Activated CD4-positive, alpha-beta T cell treated with anti-CD3 and anti-CD28 coated beads for 36 hours (primary cell): ENCODE measurements at regions of chr9 and their contacts with region 1.

Region 1: DNA sequence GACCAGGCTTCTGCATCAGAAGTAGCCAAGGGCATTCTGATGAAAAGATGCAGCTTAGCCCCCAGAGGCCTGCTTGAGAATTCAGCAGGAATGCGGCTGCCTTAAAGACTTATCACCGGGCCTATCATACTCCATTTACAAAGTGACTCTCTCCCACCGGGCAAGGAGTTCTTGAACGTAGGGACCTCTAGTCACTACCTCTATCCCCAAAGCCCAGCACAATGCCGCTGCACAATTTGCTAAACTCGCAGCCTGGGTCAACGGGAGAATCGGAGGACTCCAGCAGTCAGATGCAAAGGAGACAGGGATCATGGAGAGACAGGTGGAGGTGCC is 661 bp downstream of the PDCL start:
- DNase-seq: peak; percentile 22
- ATAC-seq: peak; percentile 1
- H3K4me3 Mint-ChIP-seq: peak overlapping the region; percentile 92
- H3K27ac Mint-ChIP-seq: peak overlapping the region; percentile 90
- H3K4me1 Mint-ChIP-seq: peaks cover 31% of the 10 kb centered on the region
- H3K27me3 Mint-ChIP-seq: no peaks in the 10 kb centered on the region

Region 2: DNA sequence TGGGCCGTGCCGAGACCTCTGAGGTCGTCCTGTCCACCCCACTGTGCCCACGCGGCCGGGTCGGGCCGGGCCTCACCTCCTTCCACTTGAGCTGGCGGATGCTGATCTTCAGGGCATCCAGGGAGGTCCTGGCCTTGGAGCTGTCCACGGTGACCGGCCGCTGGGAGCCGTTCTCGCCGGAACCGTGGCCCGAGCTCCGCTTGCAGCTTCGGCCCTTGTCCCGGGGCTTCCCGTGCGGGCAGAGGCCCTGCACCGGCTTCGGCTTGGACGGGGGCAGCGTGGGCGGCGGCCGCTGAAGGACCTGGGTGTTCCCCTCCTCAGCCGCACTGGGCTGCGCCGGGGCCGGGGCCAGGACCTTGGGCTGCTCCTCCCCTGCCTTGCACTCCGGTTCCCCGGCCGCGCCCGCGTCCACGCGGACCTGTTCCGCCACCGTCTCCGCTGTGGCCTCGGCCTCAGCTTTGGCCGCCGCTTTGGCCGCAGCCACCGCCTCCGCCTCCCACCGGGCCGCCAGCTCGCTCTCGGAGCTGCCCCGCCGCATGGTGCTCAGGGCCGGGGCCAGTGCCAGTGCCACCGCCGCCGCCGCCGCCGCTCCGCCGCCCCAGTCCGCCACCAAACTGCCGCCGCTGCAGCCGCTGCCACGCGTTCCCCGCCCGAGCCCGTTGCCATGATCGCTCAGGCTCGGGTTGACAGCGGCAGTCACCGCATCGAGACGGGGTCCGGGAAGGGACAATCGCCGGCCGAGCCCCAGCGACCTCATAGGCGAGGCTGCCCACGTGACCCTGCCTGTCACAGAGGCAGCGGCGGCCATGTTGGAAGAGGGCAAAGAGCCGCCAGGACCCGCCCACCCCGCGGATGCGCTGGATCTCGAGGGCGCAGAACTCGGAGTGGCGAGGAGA is 734.9 kb before region 1 on chr9 and contains the start of gene TTLL11:
- CTCF ChIA-PET with region 1: interaction called, 3 read pairs
- POLR2A ChIA-PET with region 1: no interaction called
- intact Hi-C with region 1: loop called in 1 of 2 experiments (anchors 1 kb)
- DNase-seq: peak; percentile 99
- ATAC-seq: peak; percentile 95
- H3K4me3 Mint-ChIP-seq: peak within 1 kb of the TSS; percentile 78
- H3K27ac Mint-ChIP-seq: peak within 1 kb of the TSS; percentile 8
- H3K4me1 Mint-ChIP-seq: peaks cover 29% of the 10 kb centered on the region
- H3K27me3 Mint-ChIP-seq: peaks cover 5% of the 10 kb centered on the region
- total RNA-seq, gene TTLL11: 1.3 to 1.8 TPM

Region 3: GRCh38 chr9:122264360-122265148 is 563.2 kb before region 1 on chr9 and contains the starts of genes MRRF and RBM18:
- CTCF ChIA-PET with region 1: no interaction called
- POLR2A ChIA-PET with region 1: no interaction called
- intact Hi-C with region 1: loop called in 1 of 2 experiments (anchors 1 kb)
- DNase-seq: peak; percentile 93
- ATAC-seq: peak; percentile 83
- H3K4me3 Mint-ChIP-seq: peak within 1 kb of the TSS; percentile 98
- H3K27ac Mint-ChIP-seq: peak within 1 kb of the TSS; percentile 99
- H3K4me1 Mint-ChIP-seq: peaks cover 44% of the 10 kb centered on the region
- H3K27me3 Mint-ChIP-seq: no peaks in the 10 kb centered on the region
- total RNA-seq, gene MRRF: 57.3 to 61.5 TPM
- total RNA-seq, gene RBM18: 22.3 to 28.6 TPM

Region 4: DNA sequence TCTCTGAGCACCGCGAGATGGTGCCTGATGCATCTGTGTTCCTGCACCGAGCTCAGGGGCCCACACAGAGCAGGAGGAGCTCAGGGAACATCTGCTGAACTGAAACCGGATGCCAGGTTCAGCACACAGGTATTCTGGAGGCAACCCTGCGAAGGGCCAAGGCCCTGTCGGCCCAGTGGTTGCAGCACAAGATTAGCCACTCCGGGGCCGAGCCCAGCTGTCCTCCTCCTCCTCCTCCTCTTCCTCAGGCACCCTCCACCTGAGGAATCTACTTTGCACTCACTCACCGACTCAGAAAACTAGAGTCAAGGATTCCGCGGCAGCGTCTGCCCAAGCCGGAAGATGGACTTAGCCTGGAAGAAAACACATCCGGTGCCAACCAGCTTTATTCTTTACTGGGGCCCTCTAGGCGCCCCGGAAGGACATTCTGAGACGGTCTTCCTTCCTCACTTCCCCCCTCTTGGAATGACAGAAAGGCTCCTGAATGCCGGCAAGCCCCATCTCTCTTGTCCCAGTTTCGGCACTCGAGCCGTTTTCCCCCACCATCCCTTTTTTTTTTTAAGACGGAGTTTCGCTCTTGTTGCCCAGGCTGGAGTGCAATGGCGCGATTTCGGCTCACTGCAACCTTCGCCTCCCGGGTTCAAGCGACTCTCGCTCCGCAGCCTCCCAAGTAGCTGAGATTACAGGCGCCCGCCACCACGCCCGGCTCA is 85.4 kb after region 1 on chr9 and contains the start of gene ZBTB6:
- CTCF ChIA-PET with region 1: no interaction called
- POLR2A ChIA-PET with region 1: no interaction called
- intact Hi-C with region 1: loop called (anchors 1 to 5 kb)
- DNase-seq: peak; percentile 86
- ATAC-seq: peak; percentile 96
- H3K4me3 Mint-ChIP-seq: peak within 1 kb of the TSS; percentile 100
- H3K27ac Mint-ChIP-seq: peak within 1 kb of the TSS; percentile 100
- H3K4me1 Mint-ChIP-seq: peaks cover 33% of the 10 kb centered on the region
- H3K27me3 Mint-ChIP-seq: no peaks in the 10 kb centered on the region
- total RNA-seq, gene ZBTB6: 8.8 to 9.3 TPM

Region 5: DNA sequence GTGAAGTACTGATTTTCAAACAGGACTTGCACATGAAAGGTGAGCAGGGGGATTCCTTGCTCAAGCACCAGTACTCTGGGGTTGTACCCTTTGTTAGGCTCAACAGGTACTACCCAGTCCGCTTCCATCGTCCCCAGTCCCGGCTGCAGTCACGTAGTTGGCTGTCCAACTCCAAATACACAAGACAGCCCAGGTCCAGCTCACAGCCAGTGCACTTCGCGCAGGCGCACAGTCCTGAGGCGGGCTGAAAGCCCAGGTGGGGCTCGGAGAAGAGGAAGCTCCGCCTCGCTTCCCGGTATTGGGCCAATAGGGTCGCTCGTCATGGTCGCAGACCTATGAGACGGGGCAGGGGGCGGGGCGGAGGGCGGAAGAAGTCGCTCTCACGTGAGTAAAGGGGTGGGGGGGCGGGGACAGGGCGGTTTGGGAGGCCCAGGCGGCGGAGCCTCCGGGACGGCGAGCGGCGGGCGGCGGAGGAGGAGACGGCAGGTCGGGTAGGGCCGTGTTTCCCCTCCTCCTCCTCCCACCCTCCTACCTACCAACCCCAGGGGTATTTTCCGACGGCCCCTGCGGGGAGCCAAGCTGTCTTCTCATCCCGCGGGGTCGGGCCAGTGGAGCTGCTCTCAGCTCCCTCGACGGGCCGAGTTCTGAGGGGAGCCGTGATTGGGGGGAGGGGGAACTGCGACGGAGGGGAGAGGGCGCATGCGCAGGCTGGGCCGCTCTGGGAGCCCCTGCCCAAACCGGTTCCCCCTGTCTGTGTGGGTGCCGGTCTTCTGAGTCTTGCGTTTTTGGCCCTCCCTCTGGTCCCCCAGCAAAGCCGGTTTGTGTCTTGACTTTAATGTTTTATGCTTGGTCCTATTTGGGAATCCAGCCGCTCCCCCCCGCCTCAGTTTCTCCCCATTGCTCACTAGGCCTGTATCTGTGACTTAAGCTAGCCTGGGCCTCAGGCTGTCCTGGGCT is 113.2 kb after region 1 on chr9 and contains the start of gene RABGAP1:
- CTCF ChIA-PET with region 1: interaction called, 5 read pairs
- POLR2A ChIA-PET with region 1: interaction called, 5 read pairs
- intact Hi-C with region 1: loop called in 1 of 2 experiments (anchors 2 kb)
- DNase-seq: peak; percentile 99
- ATAC-seq: peak; percentile 99
- H3K4me3 Mint-ChIP-seq: peak within 1 kb of the TSS; percentile 99
- H3K27ac Mint-ChIP-seq: peak within 1 kb of the TSS; percentile 95
- H3K4me1 Mint-ChIP-seq: peaks cover 33% of the 10 kb centered on the region
- H3K27me3 Mint-ChIP-seq: no peaks in the 10 kb centered on the region
- total RNA-seq, gene RABGAP1: 24.3 to 27.2 TPM

Region 6: DNA sequence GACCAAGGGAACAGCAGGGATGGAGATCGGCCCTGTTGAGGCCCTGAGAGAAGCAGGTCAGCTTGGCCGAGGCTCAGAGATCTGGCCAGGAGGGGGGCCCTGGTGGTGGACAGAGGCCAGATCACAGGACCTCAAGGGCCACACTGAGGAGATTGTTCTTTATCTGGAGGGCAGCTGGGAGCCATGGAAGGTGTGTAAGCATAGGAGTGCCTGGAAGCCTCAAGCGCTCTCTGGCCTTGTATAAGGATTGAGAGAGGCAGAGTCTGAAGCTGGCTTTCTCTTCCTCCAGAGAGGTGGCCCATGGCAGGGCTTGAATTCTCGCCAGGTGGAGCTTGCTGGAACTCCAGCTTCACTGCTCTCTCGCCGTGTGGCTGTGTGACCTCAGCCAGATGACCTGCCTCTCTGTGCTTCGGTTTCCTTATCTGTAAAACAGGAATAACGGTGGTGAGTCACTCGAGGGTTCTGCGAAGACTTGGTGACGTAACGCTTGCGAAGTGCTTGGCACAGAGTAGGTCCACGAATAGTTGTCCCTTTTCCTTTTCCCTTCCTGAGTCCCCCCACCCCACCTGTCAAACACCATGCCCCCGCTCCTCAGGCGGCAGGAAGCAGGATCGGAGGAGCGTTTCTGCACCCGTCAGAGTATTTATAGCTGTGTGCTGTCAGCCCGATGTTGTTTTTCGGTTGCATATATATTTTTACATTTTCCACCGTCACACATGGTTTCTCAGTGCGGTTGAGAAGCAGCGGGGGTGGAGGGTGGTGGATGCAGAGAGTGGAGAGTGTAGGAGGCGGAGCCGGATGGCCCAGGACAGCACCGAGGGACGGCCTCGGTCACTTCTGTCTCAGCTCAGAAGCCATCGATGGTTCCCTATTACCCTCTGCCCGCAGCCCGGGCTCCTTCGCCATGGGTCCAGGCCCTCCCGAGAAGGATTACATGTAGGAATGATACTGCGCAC is 511.3 kb after region 1 on chr9:
- CTCF ChIA-PET with region 1: no interaction called
- POLR2A ChIA-PET with region 1: no interaction called
- intact Hi-C with region 1: loop called in 1 of 2 experiments (anchors 5 kb)
- DNase-seq: peak; percentile 87
- ATAC-seq: peak; percentile 75
- H3K4me3 Mint-ChIP-seq: peak overlapping the region; percentile 62
- H3K27ac Mint-ChIP-seq: peak overlapping the region; percentile 99
- H3K4me1 Mint-ChIP-seq: peaks cover 35% of the 10 kb centered on the region
- H3K27me3 Mint-ChIP-seq: no peaks in the 10 kb centered on the region